ENCODE measurements at regions of chr20 and their contacts with region 1.

Region 1: DNA sequence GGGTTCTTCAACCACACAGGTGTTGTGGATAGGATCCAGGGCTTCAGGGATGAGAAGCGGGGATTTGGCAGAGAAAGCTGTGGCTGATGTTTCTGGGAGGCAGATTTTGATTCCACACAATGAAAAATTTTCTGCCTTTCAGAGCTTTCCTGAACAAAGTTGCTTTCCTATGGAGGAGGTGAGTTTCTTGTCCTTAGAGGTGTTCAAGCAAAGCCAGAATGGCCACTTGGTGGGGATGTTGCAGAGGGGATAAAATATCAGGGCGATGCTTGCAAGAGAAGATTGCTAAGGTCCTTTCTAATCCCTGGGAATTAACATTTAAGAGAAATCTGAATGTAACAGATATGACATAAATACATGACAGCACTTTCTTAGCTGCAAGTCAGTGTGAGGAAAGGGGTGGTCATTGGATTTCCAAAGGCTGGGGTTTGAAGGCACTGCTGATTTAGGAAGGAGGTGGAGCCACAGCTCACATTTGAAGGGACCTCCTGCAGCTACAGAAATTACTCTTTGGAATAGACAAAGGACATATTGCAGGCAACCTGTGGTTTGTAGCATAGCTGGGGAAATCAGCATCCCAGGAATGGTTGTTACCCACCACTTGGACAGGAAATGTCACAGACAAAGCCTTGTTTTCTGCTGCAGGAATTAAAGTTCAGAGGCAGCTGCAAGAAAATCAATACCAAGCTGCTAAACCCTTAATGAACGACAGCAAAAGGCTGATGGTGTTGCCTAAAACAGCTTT is 271.1 kb upstream of the CHD6 start:
- DNase-seq: no peak

Region 2: DNA sequence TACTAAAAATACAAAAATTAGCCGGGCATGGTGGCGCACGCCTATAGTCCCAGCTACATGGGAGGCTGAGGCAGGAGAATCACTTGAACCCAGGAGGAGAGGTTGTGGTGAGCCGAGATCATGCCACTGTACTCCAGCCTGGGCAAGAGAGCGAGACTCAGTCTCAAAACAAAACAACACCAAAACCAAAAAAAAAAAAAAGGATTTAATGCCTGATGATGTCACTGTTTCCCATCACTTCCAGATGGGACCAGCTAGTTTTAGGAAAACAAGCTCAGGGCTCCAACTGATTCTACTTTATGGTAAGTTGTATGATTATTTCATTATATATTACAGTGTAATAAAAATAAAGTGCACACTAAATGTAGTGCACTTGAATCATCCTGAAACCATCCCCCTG is 96.3 kb after region 1 on chr20:
- CTCF ChIA-PET with region 1: interaction called, 10 read pairs
- POLR2A ChIA-PET with region 1: no interaction called
- DNase-seq: no peak

Measured in HEK293T (cell line).